Activated naive CD4-positive, alpha-beta T cell treated with anti-CD3 and anti-CD28 coated beads for 36 hours (primary cell): ENCODE measurements at regions of chr2 and their contacts with region 1.

Region 1: DNA sequence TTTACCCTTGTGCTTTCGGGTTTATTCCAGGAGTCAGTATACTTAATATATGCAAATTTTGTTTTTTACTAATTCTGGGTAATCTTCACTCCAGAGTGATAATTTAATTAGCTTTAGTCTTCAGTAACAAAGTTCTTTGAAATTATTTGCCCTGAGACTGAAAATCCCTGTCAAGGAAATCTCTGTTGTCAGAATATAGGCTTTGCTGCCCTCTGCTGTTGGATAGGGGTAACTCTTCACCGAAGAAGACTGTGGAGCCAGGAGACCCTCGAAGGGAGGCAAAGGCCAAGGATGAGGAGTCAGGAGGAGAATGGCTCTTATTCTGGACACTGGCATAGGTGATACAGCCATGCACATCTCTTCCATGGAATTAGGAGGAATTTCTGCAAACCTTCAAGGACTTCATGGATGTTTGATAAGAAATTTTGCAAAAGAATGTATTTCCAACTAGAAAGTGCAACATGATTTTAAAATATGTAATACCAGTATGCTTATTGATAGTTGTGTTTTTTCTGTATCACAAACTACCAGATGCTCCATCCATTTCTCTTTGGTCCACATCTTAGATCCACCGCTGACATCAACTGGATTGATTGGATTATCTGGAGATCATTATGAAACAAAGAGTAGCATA is 182.3 kb downstream of the RDH14 start:
- DNase-seq: peak; percentile 46
- H3K4me3 Mint-ChIP-seq: no peak overlapping the region
- H3K27ac Mint-ChIP-seq: no peak overlapping the region
- H3K4me1 Mint-ChIP-seq: no peaks in the 10 kb centered on the region
- H3K27me3 Mint-ChIP-seq: peaks cover 11% of the 10 kb centered on the region

Region 2: DNA sequence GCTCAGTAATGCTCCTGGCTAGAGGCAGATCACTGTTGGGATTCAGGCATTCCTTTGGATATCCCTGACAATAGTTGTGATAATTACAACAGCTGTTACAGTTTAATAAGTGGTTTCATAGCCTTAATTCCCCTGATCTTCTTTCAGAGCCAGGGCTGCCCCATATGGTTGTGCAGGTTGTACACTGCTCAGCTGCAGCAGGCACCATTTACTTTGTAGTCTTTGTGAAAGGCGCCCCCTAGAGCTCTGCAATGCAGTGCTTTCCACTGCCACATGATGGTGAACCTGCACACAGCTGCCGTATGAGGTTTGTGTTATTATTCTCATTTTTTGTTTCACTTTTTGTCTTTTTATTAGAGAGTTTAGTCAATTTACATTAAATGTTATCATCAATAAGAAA is 260.5 kb before region 1 on chr2:
- CTCF ChIA-PET with region 1: no interaction called
- intact Hi-C with region 1: loop called (anchors 10 kb)
- DNase-seq: peak; percentile 43
- H3K4me3 Mint-ChIP-seq: no peak overlapping the region
- H3K27ac Mint-ChIP-seq: no peak overlapping the region
- H3K4me1 Mint-ChIP-seq: no peaks in the 10 kb centered on the region
- H3K27me3 Mint-ChIP-seq: peaks cover 13% of the 10 kb centered on the region

Region 3: DNA sequence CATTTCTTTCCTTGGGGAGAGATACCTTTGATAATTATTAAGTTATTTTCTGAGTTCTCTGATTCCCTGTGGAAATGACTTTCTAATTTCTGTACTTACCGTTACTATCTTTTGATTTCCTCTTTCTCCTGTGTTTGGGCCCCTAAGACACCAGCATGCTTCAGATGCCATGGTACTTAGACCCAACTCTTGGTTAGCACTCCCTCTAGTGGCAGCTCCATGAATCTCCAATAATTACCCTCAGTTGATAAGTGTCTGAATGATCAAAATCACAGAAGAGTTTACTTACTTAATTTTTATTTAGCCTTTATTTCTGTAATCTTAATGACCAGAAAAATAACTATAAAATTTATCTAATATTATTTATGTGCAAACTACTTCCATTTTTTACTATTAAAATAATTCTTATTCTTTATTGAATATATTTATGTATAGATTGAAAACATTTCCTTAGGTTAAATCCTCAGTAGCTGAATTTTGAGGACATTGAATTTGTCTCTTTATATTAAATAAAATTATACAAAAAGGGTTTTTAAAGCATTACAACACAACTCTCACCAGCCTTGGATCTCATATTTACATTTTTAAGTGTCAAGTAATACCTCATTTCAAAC is 199.3 kb before region 1 on chr2:
- CTCF ChIA-PET with region 1: interaction called, 4 read pairs
- intact Hi-C with region 1: loop called (anchors 2 kb)
- DNase-seq: peak; percentile 54
- H3K4me3 Mint-ChIP-seq: no peak overlapping the region
- H3K27ac Mint-ChIP-seq: no peak overlapping the region
- H3K4me1 Mint-ChIP-seq: no peaks in the 10 kb centered on the region
- H3K27me3 Mint-ChIP-seq: peaks cover 11% of the 10 kb centered on the region